ENCODE measurements at regions of chr1 and their contacts with region 1.

Region 1: GRCh38 chr1:47755101-47755990 is 241.8 kb downstream of the TRABD2B start:
- ATAC-seq: peak in 1 of 8 experiments; percentile 41
- H3K4me3 ChIP-seq: no peak overlapping the region
- H3K27ac ChIP-seq: no peak overlapping the region
- H3K4me1 ChIP-seq: peaks cover 7 to 8% of the 10 kb centered on the region in 2 donors

Region 2: GRCh38 chr1:47986761-47987200 is 231.4 kb after region 1 on chr1:
- in situ Hi-C with region 1: no loop called
- ATAC-seq: peak in 3 of 8 experiments; percentile 22 to 61 (median 49)
- H3K4me3 ChIP-seq: no peak overlapping the region
- H3K27ac ChIP-seq: no peak overlapping the region
- H3K4me1 ChIP-seq: peaks cover 5 to 11% of the 10 kb centered on the region in 2 donors

Region 3: GRCh38 chr1:48202030-48202752 is 446.8 kb after region 1 on chr1:
- in situ Hi-C with region 1: loop called in 1 of 9 experiments (anchors 25 kb)
- ATAC-seq: peak; percentile 37 to 99 (median 80)
- H3K4me3 ChIP-seq: no peak overlapping the region
- H3K27ac ChIP-seq: no peak overlapping the region
- H3K4me1 ChIP-seq: peaks cover 0 to 5% of the 10 kb centered on the region in 2 donors

Measured in motor neuron (in vitro differentiated cells).